OCI-LY7 (cell line): ENCODE measurements at regions of chr7 and their contacts with region 1.

Region 1: DNA sequence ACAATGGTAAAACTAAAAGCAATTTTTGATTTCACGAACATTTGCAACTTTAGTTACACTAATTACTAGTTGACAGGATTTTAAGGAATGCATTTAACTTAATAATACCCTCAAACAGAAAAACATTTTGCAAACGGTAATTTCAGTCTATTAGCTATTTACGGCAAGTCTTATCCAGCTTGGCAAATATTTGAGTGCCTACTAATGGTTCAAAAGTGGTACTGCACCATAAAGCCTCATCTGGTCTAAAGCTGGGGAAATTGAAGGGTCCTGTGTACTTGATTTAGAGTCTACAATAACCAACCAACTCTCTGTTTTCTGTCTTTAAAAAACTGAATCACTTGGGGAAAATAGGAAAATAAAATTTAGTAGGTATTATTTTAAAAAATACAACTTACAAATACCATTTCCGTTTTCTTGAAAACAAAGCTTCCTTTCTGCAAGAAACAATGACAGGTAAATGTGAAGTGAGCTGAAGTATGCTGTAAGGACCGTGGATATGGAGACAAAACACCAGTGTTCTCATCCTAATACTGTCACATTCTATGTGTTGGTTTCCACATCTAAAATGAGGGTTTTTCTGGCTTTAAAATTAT is 142.3 kb downstream of the VPS50 start:
- DNase-seq: peak; percentile 59
- H3K4me3 ChIP-seq: no peak overlapping the region
- H3K27ac ChIP-seq: no peak overlapping the region
- H3K4me1 ChIP-seq: peaks cover 29% of the 10 kb centered on the region
- CTCF ChIP-seq: peak; percentile 91

Region 2: DNA sequence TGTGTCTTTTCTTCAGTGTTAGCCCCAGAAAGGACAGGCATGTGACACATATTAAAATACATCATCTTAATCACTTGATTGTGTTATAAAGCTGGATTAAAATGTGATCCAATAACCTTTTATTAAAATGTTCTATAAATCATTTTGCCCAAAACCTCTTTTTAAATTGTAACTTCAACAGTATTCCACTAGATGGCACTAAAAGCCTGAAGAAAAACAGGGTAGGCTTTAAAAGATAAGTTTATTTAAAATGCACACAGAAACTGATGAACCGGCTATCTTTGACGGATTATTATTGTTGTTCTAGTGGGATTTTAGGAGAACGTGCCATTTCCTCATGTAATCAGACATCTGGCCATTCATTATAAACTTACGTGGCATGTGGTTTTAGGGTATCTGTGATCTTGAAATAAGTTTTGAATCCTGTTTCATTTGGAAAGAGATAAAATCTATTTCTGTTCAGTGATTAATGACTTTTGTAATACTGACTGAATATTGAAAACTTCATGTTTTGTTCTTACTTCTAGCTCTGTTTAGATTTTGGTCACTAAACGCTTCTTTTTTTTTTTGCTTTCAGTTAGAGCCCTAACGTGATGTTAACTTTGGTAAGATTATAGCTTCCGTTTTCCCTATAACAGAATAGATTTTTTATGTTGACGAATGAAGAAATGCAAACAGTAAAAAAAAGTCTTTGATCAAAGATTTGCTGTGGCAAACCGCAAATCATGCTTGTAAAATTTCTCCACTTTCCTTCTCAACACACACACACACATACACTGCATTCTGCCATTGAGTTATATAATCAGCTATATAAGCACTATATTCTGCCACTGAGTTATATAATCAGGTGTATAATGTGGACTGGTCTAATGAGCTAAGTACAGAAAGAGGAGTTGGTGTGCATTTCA is 128.7 kb before region 1 on chr7:
- CTCF ChIA-PET with region 1: interaction called, 3 read pairs
- POLR2A ChIA-PET with region 1: no interaction called
- intact Hi-C with region 1: loop called (anchors 2 kb)
- DNase-seq: peak; percentile 39
- H3K4me3 ChIP-seq: no peak overlapping the region
- H3K27ac ChIP-seq: no peak overlapping the region
- H3K4me1 ChIP-seq: no peaks in the 10 kb centered on the region
- CTCF ChIP-seq: peak; percentile 90